Gastrocnemius medialis (tissue), 4 donors: ENCODE measurements at regions of chr3 and their contacts with region 1.

Region 1: GRCh38 chr3:4741404-4742307 is 237.6 kb upstream of the BHLHE40 start:
- DNase-seq: peak; percentile 60 to 76
- ATAC-seq: peak; percentile 99
- H3K4me3 ChIP-seq: peak overlapping the region in 1 of 4 donors; percentile 2
- H3K27ac ChIP-seq: peak overlapping the region; percentile 73 to 83 (median 79)
- H3K4me1 ChIP-seq: peaks cover 23 to 32% of the 10 kb centered on the region in 2 donors
- H3K27me3 ChIP-seq: no peaks in the 10 kb centered on the region
- CTCF ChIP-seq: no peak
- POLR2A ChIP-seq: peak in 1 of 2 donors; percentile 50

Region 2: DNA sequence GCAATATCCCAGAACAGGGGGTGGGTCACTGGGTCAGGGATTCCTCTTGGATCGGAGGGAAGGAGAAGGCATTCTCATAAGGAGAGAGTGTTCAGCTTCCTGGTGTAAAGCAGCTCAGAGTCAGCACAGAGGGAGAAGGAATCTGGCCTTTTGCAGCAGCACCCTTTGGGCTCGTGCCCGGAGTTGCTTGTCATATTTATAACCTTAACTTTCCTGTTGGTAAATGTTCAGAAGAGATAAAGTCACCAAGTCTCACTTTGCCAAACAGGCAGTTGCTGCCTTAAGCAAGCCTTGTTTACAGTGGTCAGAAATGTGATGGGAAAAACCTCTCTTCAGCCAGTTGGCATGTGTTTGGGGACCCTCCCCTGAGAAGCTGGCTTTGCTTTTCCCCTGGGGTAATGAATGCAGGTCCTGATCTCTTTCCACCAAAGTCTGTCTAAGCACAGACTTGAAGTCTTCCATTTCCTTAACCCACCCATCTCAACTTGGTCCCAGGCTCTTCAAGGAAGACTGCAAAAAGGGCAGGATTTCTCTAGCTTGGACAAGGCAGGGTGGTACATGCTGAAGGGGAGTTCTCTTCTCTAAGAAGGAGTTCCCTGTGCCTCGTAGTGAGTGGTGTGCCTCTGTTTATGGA is 30.6 kb after region 1 on chr3:
- in situ Hi-C with region 1: no loop called
- intact Hi-C with region 1: no loop called
- DNase-seq: peak; percentile 72 to 87
- ATAC-seq: peak; percentile 94 to 95
- H3K4me3 ChIP-seq: no peak overlapping the region
- H3K27ac ChIP-seq: peak overlapping the region; percentile 77 to 83 (median 82)
- H3K4me1 ChIP-seq: peaks cover 36 to 45% of the 10 kb centered on the region in 2 donors
- H3K27me3 ChIP-seq: no peaks in the 10 kb centered on the region
- CTCF ChIP-seq: no peak
- POLR2A ChIP-seq: no peak

Region 3: DNA sequence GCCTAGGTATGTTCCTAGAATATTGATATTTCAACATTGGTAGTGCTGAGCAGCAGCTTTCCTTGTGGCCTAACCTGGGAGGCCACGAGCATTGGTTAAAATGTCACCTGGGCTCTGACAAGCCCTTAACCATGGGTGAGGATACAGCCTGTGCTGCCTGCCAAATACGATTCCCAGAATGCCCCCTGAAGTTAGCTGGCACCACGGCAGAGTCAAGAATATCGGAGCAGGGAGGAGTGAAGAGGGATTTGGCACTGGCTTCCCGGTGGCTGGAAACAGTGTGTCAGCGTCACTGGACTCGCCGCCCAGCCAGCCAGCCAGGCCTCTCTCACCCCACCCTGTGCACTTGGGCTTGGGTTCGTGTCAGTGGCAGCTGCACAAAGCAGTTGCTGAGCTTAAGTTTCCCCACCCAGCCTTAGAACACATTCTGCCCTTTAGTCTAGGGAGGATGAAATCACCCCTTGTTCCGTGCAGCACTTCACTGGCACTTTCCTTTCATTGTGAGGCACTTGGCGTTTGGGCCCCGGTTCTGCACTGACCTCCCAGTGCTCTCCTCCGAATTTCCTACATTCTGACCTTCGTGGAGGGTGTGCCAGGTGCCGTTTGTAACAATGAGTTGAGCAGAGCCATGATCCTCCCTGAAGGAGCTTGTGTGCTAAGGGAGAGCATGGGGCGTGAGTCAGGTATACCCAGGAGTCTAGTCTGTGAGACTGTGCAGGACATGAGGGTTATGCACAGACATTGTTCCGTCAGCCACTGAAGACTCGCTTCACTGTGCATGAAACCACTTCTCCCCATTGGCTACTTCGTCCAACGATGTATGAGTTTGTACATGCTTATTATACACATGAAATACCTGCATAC is 84.8 kb after region 1 on chr3:
- in situ Hi-C with region 1: no loop called
- intact Hi-C with region 1: loop called (anchors 5 kb)
- DNase-seq: peak; percentile 75 to 90
- ATAC-seq: peak; percentile 72 to 74
- H3K4me3 ChIP-seq: peak overlapping the region; percentile 12 to 36 (median 23)
- H3K27ac ChIP-seq: peak overlapping the region; percentile 80 to 89 (median 86)
- H3K4me1 ChIP-seq: peaks cover 48 to 67% of the 10 kb centered on the region in 2 donors
- H3K27me3 ChIP-seq: no peaks in the 10 kb centered on the region
- CTCF ChIP-seq: no peak
- POLR2A ChIP-seq: peak; percentile 67 to 83

Region 4: GRCh38 chr3:5194341-5195159 is 452.9 kb after region 1 on chr3:
- in situ Hi-C with region 1: no loop called
- intact Hi-C with region 1: loop called (anchors 10 kb)
- DNase-seq: peak; percentile 69 to 70
- ATAC-seq: peak; percentile 97 to 98
- H3K4me3 ChIP-seq: no peak overlapping the region
- H3K27ac ChIP-seq: peak overlapping the region; percentile 79 to 88 (median 82)
- H3K4me1 ChIP-seq: peaks cover 49 to 51% of the 10 kb centered on the region in 2 donors
- H3K27me3 ChIP-seq: no peaks in the 10 kb centered on the region
- CTCF ChIP-seq: no peak
- POLR2A ChIP-seq: peak in 1 of 2 donors; percentile 39